Motor neuron (in vitro differentiated cells): ENCODE measurements at regions of chr2 and their contacts with region 1.

Region 1: GRCh38 chr2:237072067-237072931 is 13.4 kb upstream of the COPS8 start:
- ATAC-seq: peak in 7 of 8 experiments; percentile 47 to 81 (median 53)
- H3K4me3 ChIP-seq: no peak overlapping the region
- H3K27ac ChIP-seq: no peak overlapping the region
- H3K4me1 ChIP-seq: no peaks in the 10 kb centered on the region

Region 2: GRCh38 chr2:235766278-235766677 is 1306.0 kb before region 1 on chr2:
- in situ Hi-C with region 1: loop called in 3 of 9 experiments (anchors 25 kb)
- ATAC-seq: peak; percentile 66 to 96 (median 78)
- H3K4me3 ChIP-seq: no peak overlapping the region
- H3K27ac ChIP-seq: no peak overlapping the region
- H3K4me1 ChIP-seq: peaks cover 0 to 5% of the 10 kb centered on the region in 2 donors

Region 3: GRCh38 chr2:235779444-235779896 is 1292.8 kb before region 1 on chr2:
- in situ Hi-C with region 1: loop called in 5 of 9 experiments (anchors 25 kb)
- ATAC-seq: peak; percentile 98 to 100 (median 98)
- H3K4me3 ChIP-seq: no peak overlapping the region
- H3K27ac ChIP-seq: no peak overlapping the region
- H3K4me1 ChIP-seq: peaks cover 4 to 13% of the 10 kb centered on the region in 2 donors

Region 4: DNA sequence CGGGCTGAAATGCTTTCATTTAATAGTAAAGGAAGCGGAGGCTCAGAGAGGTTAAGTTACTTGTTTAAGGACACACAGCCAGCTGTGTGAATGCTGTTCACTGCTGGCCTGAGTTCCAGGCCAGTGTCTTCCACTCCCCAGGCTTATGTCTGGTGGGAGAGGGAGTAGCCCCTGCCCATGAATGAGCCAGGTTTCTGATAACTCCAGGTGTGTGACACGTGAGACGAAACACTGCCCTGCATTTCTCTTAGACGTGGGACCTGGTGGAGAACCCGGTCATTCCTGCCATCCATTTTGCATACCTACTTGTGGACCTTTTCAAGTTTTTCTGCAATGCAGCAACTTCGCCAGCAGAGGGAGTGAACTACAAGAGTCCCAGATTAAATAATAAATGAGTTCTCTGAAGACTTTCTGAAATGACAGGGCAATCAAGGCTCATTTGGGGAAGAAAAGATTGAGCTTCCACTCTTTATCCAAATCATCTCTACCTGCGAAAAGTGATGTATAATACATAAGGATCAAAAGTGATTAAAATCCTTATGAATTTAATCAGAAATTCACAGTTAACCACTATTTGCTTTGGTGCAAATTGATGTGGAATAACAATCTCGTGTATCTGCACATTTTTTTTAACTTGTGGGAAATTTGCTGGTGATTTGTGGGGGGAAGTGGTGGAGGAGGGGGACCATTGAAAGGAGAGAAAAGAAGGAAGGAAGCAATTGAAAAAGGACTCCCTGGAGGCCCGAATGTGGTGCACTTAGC is 728.7 kb before region 1 on chr2:
- in situ Hi-C with region 1: loop called in 7 of 9 experiments (anchors 10 to 25 kb)
- ATAC-seq: peak in 3 of 8 experiments; percentile 32 to 50 (median 46)
- H3K4me3 ChIP-seq: no peak overlapping the region
- H3K27ac ChIP-seq: no peak overlapping the region
- H3K4me1 ChIP-seq: peaks cover 29 to 34% of the 10 kb centered on the region in 2 donors

Region 5: DNA sequence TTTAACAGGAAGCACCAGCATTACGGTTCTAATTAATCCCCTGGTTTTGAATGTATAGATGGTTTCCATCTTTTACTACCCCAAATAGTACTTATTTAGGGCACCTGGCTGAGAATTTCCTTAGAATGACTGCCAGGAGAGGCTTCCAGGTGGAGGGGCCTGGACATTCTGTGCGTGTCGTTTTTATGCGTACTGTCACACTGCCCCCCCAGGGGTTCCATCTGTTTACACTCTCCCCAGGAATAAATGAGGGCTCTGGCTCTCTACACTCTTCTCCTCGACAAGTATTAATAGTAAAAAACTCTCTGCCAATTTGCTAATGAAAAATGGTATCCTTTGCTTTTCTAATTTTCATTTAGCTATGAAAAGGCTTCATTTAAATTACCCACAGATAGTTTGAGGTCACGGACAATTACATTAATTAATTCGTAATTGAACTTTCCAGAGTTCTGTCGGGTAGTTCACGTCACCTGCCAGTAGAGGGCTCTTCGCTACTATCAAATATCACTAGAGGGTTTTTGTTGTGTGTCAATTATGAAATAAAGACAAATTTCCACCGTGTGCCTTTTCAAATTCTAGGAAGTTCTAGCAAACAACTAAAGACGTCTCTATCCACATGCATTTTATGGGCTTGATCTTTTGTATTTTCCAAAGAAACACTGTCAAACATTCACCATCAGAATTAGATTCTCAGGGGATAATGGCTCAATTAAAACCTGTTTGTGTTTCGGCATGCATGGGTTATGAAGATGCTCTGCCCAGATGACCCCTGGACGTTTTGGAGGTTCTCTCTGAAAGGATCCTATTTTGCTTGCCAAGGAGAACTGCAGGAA is 719.3 kb before region 1 on chr2:
- in situ Hi-C with region 1: loop called in 8 of 9 experiments (anchors 10 to 25 kb)
- ATAC-seq: peak in 3 of 8 experiments; percentile 34 to 54 (median 37)
- H3K4me3 ChIP-seq: no peak overlapping the region
- H3K27ac ChIP-seq: no peak overlapping the region
- H3K4me1 ChIP-seq: peaks cover 2 to 6% of the 10 kb centered on the region in 2 donors

Region 6: DNA sequence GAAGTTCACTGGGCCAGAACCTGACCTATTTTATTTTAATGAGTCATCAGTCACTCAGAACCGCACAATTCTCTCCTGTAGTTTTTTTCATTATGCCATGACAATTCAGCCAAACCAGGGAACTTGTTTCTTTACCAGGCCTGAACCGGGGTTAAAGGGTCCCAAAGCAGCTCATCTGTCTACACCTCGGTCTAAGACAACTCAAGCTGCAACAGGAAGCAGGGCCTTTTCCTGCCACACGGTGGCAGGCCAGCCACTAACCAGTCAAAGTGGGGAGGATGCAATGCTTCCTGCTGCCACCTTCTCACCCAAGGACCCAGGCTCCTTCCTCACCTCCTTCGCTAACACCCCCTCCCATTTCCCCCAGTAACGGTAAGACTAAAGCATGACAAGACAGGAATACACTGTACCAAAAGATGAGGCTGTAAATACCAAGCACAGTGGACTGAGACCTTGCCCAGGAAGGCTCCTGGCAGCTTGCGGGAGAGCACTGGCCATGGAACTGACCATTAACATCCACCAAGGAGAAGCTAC is 559.3 kb before region 1 on chr2:
- in situ Hi-C with region 1: loop called in 2 of 9 experiments (anchors 25 kb)
- ATAC-seq: peak; percentile 72 to 99 (median 84)
- H3K4me3 ChIP-seq: no peak overlapping the region
- H3K27ac ChIP-seq: no peak overlapping the region
- H3K4me1 ChIP-seq: peaks cover 4 to 17% of the 10 kb centered on the region in 2 donors

Region 7: DNA sequence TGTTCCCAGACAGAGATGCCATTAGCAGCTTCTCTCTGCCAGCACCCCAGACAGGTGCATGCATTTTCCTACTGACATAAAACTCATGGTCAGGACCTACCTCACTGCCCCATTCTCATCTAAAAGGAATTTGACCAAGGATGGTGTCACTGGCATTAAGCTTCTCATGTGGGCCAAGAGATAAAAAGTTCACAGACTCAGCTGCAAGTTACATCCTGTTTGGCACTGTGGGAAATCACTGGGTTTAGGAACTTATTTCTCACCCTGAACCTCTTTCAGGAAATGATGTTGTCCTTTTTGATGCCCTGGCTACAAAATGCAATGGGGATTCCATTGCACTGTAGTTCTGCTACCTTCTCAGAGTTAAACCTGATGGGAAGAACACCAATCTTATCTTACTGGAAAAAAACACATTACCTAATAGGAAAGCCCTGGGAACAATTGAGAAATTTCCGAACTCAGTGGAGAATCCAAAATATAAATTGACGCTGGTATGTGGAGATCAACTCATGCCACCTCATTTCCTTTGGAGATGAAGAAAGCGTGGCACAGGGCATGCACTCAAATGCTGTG is 238.7 kb before region 1 on chr2:
- in situ Hi-C with region 1: no loop called
- ATAC-seq: no peak
- H3K4me3 ChIP-seq: no peak overlapping the region
- H3K27ac ChIP-seq: no peak overlapping the region
- H3K4me1 ChIP-seq: no peaks in the 10 kb centered on the region